Psoas muscle (tissue), 8 donors: ENCODE measurements at regions of chr1 and their contacts with region 1.

Region 1: GRCh38 chr1:161402446-161402845 is 34.8 kb upstream of the CFAP126 start:
- DNase-seq: no peak
- ATAC-seq: no peak
- H3K4me3 ChIP-seq: no peak overlapping the region
- H3K27ac ChIP-seq: no peak overlapping the region
- H3K4me1 ChIP-seq: no peaks in the 10 kb centered on the region
- H3K27me3 ChIP-seq: no peaks in the 10 kb centered on the region
- CTCF ChIP-seq: no peak

Region 2: DNA sequence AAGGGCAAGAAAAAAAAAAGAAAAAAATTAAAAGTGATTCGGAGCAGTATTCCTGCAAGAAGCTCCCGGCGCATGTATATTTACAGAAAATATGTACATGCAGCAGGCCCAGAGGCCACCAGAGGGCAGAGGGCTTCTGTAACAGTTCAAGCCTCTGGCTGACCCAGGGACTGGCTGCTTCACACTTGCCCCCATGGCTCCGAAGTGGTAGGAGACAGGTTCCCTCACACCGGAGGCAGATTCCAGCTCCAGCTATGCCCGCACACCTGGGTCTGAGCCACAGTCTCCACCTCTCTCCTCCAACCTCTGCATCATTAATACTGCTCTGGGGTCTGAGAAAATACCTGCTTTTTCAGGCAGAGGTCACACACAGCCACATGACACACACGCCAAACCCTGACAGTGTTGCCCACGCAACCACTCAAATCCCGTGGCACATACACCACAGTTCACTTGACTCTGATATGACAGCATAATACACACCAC is 330.5 kb before region 1 on chr1:
- intact Hi-C with region 1: no loop called
- DNase-seq: peak; percentile 59 to 72
- ATAC-seq: peak; percentile 33 to 67 (median 55)
- H3K4me3 ChIP-seq: no peak overlapping the region
- H3K27ac ChIP-seq: no peak overlapping the region
- H3K4me1 ChIP-seq: no peaks in the 10 kb centered on the region
- H3K27me3 ChIP-seq: no peaks in the 10 kb centered on the region
- CTCF ChIP-seq: peak; percentile 44

Region 3: GRCh38 chr1:161749509-161750407 is 347.3 kb after region 1 on chr1 and contains the start of gene DUSP12:
- intact Hi-C with region 1: loop called in 1 of 2 experiments (anchors 10 kb)
- DNase-seq: peak; percentile 93 to 97
- ATAC-seq: peak; percentile 98 to 100 (median 100)
- H3K4me3 ChIP-seq: peak within 1 kb of the TSS; percentile 77
- H3K27ac ChIP-seq: peak within 1 kb of the TSS; percentile 78
- H3K4me1 ChIP-seq: peaks cover 9% of the 10 kb centered on the region
- H3K27me3 ChIP-seq: peaks cover 0 to 18% (median 0%) of the 10 kb centered on the region in 3 donors
- CTCF ChIP-seq: no peak
- total RNA-seq, gene DUSP12: 4.4 to 10.9 (median 5.6) TPM

Region 4: DNA sequence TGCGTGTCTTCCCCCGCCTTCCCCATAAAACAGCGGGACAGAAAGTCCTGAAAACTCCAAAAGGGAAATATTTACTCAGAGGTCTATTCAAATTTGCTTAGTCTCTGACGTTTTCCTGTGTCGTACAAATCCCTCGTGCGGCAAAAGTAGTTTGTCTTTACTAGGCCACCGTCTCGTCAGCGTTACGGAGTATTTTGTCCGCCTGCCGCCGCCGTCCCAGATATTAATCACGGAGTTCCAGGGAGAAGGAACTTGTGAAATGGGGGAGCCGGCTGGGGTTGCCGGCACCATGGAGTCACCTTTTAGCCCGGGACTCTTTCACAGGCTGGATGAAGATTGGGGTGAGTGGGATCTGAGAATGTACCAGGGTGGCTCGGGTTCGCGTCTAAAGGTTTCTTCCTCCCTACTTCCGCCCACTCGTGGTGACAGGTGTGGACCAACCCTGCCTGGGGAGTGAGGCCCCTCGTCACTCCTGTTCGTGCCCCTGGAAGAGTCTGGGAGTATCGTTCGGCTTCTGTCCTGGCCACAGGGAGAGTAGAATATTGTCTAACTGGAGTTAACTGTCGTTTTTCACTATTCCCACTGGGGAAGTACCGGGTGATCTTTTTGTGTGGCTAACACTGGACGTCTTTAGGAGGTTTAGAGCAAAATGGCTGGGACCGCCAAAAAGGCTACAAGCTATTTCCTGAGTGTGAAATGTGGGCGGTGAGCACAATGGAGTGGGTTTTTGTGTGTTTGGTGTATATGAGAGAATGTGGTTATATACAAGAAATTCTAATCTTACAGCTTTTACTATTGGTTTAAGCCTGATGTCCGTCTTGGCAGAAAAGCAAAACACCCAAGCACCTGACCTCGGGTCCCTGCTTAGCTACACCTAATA is 363.9 kb after region 1 on chr1 and contains the start of gene ATF6:
- intact Hi-C with region 1: no loop called
- DNase-seq: peak; percentile 90 to 94
- ATAC-seq: peak; percentile 93 to 97 (median 96)
- H3K4me3 ChIP-seq: peak within 1 kb of the TSS; percentile 77
- H3K27ac ChIP-seq: peak within 1 kb of the TSS; percentile 88
- H3K4me1 ChIP-seq: peaks cover 24% of the 10 kb centered on the region
- H3K27me3 ChIP-seq: no peaks in the 10 kb centered on the region
- CTCF ChIP-seq: no peak
- total RNA-seq, gene ATF6: 11.0 to 17.1 (median 13.8) TPM